Gastrocnemius medialis (tissue), 4 donors: ENCODE measurements at regions of chr14 and their contacts with region 1.

Region 1: GRCh38 chr14:89701211-89702043 is 253.1 kb downstream of the EFCAB11 start:
- DNase-seq: peak; percentile 67 to 78
- ATAC-seq: peak; percentile 80 to 82
- H3K4me3 ChIP-seq: peak overlapping the region; percentile 61 to 74 (median 68)
- H3K27ac ChIP-seq: peak overlapping the region; percentile 41 to 72 (median 68)
- H3K4me1 ChIP-seq: peaks cover 12 to 17% of the 10 kb centered on the region in 2 donors
- H3K27me3 ChIP-seq: no peaks in the 10 kb centered on the region
- CTCF ChIP-seq: no peak
- POLR2A ChIP-seq: no peak

Region 2: GRCh38 chr14:89660166-89660565 is 41.3 kb before region 1 on chr14:
- in situ Hi-C with region 1: no loop called
- intact Hi-C with region 1: loop called (anchors 5 kb)
- DNase-seq: peak; percentile 51 to 52
- ATAC-seq: peak; percentile 96 to 97
- H3K4me3 ChIP-seq: peak overlapping the region; percentile 12 to 36 (median 24)
- H3K27ac ChIP-seq: peak overlapping the region; percentile 73 to 87 (median 80)
- H3K4me1 ChIP-seq: peaks cover 14 to 18% of the 10 kb centered on the region in 2 donors
- H3K27me3 ChIP-seq: no peaks in the 10 kb centered on the region
- CTCF ChIP-seq: no peak
- POLR2A ChIP-seq: no peak

Region 3: DNA sequence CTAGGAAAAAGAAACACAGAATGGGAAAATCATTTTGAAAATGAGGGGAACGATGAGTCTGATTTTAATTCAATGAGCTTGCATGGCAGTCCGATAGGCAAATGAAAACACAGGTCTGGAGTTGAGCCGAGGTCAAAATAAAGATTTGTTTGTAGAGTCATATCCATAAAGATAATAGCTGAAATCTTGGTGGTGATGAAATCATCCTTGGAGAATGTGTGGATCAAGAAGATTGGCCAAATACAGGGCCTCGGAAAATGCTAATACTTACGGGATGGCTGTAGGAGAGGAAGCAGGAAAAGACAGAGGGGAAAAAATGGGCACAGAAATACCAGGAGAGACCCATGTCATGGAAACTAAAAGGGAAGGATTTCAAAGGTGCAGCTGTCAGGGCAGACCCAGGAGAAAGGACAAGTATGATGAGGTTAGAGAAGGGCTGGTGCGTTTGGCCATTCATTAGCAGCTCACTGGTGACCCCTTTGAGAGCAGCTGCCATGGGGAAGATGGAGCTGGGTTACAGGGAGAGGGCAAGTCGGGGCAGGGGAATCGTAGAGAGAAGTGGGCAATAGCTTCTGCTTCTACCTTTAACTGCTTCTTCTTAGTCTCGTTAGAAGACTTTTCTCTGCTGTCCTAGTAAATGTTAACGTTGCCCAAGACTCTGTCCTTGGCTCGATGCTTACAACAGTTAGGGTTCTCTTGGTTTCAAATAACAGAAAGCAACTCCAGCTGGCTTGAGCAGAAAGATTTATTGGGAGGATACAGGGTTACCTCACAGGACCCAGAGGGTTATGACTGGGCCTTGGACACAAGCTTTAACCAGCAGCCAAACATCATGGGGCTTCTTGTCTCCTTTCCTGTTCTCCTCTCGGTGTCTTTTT is 91.3 kb after region 1 on chr14:
- in situ Hi-C with region 1: no loop called
- intact Hi-C with region 1: loop called (anchors 10 kb)
- DNase-seq: peak; percentile 87 to 88
- ATAC-seq: peak; percentile 98 to 99
- H3K4me3 ChIP-seq: peak overlapping the region in 1 of 4 donors; percentile 29
- H3K27ac ChIP-seq: peak overlapping the region; percentile 81 to 91 (median 89)
- H3K4me1 ChIP-seq: peaks cover 18 to 26% of the 10 kb centered on the region in 2 donors
- H3K27me3 ChIP-seq: no peaks in the 10 kb centered on the region
- CTCF ChIP-seq: no peak
- POLR2A ChIP-seq: no peak

Region 4: DNA sequence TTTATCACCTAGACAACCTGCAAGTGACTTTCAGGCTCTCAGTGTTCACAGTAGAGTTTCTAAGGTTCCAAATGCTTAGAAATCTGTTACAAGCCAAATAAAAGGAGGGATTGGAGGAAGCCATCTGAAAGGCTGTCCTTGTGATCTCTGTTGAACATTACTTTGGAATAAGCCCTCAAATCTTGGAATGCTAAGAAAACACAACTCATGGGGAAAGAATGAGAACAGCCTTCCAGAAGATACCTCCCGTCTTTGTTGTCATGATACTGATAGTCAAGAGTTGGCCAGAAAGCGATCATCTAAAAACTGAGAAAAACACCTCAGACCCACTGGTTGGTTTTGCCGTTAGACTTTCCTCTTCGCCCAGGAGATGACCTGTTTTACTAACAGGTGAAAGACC is 315.9 kb after region 1 on chr14:
- in situ Hi-C with region 1: no loop called
- intact Hi-C with region 1: no loop called
- DNase-seq: no peak
- ATAC-seq: no peak
- H3K4me3 ChIP-seq: no peak overlapping the region
- H3K27ac ChIP-seq: no peak overlapping the region
- H3K4me1 ChIP-seq: no peaks in the 10 kb centered on the region
- H3K27me3 ChIP-seq: no peaks in the 10 kb centered on the region
- CTCF ChIP-seq: no peak
- POLR2A ChIP-seq: no peak

Region 5: GRCh38 chr14:90319173-90319572 is 617.7 kb after region 1 on chr14:
- in situ Hi-C with region 1: no loop called
- intact Hi-C with region 1: no loop called
- DNase-seq: no peak
- ATAC-seq: no peak
- H3K4me3 ChIP-seq: no peak overlapping the region
- H3K27ac ChIP-seq: no peak overlapping the region
- H3K4me1 ChIP-seq: no peaks in the 10 kb centered on the region
- H3K27me3 ChIP-seq: no peaks in the 10 kb centered on the region
- CTCF ChIP-seq: no peak
- POLR2A ChIP-seq: no peak